Activated T-helper 1 cell treated with anti-CD3 and anti-CD28 coated beads, Interleukin-12 subunit alpha, Interleukin-12 subunit beta, Interleukin-2, Interleukin-4 antibody, amounts not matched to agents 30 ng/mL and 10 ng/mL and 1 ng/mL, durations not matched to agents 14 hours and 24 hours and 36 hours (primary cell): ENCODE measurements at regions of chr4 and their contacts with region 1.

Region 1: GRCh38 chr4:56530269-56531148 is 24.9 kb downstream of the ARL9 start:
- DNase-seq: peak; percentile 63
- H3K4me3 Mint-ChIP-seq: peak overlapping the region; percentile 57
- H3K27ac Mint-ChIP-seq: no peak overlapping the region
- H3K4me1 Mint-ChIP-seq: no peaks in the 10 kb centered on the region
- H3K27me3 Mint-ChIP-seq: peaks cover 18% of the 10 kb centered on the region

Region 2: GRCh38 chr4:56348576-56348975 is 181.9 kb before region 1 on chr4:
- intact Hi-C with region 1: no loop called
- DNase-seq: no peak
- H3K4me3 Mint-ChIP-seq: no peak overlapping the region
- H3K27ac Mint-ChIP-seq: no peak overlapping the region
- H3K4me1 Mint-ChIP-seq: peaks cover 5% of the 10 kb centered on the region
- H3K27me3 Mint-ChIP-seq: no peaks in the 10 kb centered on the region

Region 3: GRCh38 chr4:56467284-56468096 is 63.0 kb before region 1 on chr4 and contains the start of gene SRP72:
- intact Hi-C with region 1: loop called (anchors 1 kb)
- DNase-seq: peak; percentile 88
- H3K4me3 Mint-ChIP-seq: peak within 1 kb of the TSS; percentile 98
- H3K27ac Mint-ChIP-seq: peak within 1 kb of the TSS; percentile 99
- H3K4me1 Mint-ChIP-seq: peaks cover 60% of the 10 kb centered on the region
- H3K27me3 Mint-ChIP-seq: no peaks in the 10 kb centered on the region
- total RNA-seq, gene SRP72: 199 and 211 TPM in 2 replicates

Region 4: GRCh38 chr4:56544573-56545131 is 14.1 kb after region 1 on chr4:
- intact Hi-C with region 1: loop called (anchors 1 kb)
- DNase-seq: peak; percentile 78
- H3K4me3 Mint-ChIP-seq: peak overlapping the region; percentile 68
- H3K27ac Mint-ChIP-seq: no peak overlapping the region
- H3K4me1 Mint-ChIP-seq: peaks cover 24% of the 10 kb centered on the region
- H3K27me3 Mint-ChIP-seq: peaks cover 15% of the 10 kb centered on the region

Region 5: DNA sequence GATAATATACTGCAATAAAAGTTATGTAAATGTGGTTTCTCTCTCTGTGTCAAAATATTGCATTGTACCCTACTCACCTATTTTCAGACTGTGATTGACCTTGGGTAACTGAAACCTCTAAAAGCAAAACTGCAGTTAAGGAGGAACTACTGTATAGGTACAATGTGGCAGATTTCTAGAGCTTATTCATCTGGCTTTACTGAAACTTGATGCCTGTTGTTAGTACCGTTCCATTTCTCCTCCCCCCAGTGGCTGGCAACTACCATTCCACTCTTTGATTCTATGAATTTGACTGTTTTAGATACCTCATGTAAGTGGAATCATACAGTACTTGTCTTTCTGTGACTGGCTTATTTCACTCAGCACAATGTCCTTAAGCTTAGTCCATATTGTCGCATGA is 88.7 kb after region 1 on chr4:
- intact Hi-C with region 1: no loop called
- DNase-seq: no peak
- H3K4me3 Mint-ChIP-seq: no peak overlapping the region
- H3K27ac Mint-ChIP-seq: no peak overlapping the region
- H3K4me1 Mint-ChIP-seq: peaks cover 6% of the 10 kb centered on the region
- H3K27me3 Mint-ChIP-seq: peaks cover 5% of the 10 kb centered on the region

Region 6: GRCh38 chr4:56655209-56655626 is 124.7 kb after region 1 on chr4:
- intact Hi-C with region 1: no loop called
- DNase-seq: no peak
- H3K4me3 Mint-ChIP-seq: peak overlapping the region; percentile 87
- H3K27ac Mint-ChIP-seq: peak overlapping the region; percentile 85
- H3K4me1 Mint-ChIP-seq: peaks cover 68% of the 10 kb centered on the region
- H3K27me3 Mint-ChIP-seq: peaks cover 23% of the 10 kb centered on the region

Region 7: DNA sequence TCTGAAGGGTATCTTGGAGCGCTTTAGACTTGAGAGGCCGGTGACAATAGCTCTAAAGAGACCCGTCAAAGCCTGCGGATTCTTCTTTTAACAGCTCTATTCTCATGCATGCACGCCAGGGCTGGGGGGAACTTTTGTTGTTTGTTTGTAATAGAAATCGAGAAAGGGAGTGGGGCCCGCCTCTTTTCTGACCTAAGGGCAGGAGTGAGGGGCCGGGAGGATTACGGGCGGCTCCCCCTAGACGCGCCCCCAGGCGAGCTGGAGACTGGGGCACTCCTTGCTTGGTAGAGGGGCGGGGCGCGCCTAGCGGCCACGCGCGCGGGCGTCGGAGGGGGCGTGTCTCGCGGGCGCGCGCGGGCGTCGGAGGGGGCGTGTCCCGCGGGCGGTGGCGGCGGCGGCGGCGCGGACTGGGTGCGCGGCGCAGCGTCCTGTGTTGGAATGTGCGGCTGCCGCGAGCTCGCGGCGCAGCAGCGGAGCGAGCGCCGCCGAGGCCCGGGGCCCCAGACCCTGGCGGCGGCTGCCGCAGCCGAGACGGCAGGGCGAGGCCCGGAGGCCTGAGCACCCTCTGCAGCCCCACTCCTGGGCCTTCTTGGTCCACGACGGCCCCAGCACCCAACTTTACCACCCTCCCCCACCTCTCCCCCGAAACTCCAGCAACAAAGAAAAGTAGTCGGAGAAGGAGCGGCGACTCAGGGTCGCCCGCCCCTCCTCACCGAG is 377.1 kb after region 1 on chr4 and contains the start of gene REST:
- intact Hi-C with region 1: loop called (anchors 1 kb)
- DNase-seq: peak; percentile 81
- H3K4me3 Mint-ChIP-seq: peak within 1 kb of the TSS; percentile 84
- H3K27ac Mint-ChIP-seq: peak within 1 kb of the TSS; percentile 78
- H3K4me1 Mint-ChIP-seq: peaks cover 41% of the 10 kb centered on the region
- H3K27me3 Mint-ChIP-seq: peaks cover 10% of the 10 kb centered on the region
- total RNA-seq, gene REST: 52.4 and 60.0 TPM in 2 replicates